Endothelial cell of umbilical vein (primary cell): ENCODE measurements at regions of chr17 and their contacts with region 1.

Region 1: DNA sequence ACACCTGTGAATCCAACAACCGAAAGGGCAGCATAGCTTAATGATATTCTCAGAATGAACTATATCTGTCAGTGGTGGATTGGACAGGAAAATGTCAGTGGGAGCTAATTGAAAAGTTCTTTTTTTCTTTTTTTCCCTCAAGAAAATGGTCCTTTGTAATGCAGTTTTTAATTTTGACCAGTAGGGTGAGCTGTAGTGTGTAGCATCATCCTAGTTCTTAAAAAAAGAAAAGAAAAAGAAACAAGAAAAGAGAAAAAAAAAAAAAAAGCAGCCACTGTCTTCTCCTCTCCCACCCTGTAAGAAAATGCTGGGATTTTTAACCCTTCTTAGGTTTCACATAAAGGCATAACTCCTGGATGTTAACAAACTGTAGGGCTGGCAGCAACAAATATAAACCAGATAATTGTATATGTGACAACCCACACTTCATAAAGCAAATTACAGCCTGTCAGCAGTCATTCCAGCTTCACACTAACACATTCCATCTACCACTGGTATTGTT is 78.1 kb downstream of the SKAP1 start:
- DNase-seq: peak; percentile 69
- H3K4me3 ChIP-seq: no peak overlapping the region
- H3K27ac ChIP-seq: no peak overlapping the region
- H3K4me1 ChIP-seq: no peaks in the 10 kb centered on the region
- H3K27me3 ChIP-seq: peaks cover 2 to 4% of the 10 kb centered on the region in 2 experiments
- CTCF ChIP-seq: peak; percentile 28 to 42
- POLR2A ChIP-seq: no peak

Region 2: GRCh38 chr17:48047741-48048383 is 304.0 kb before region 1 on chr17 and contains the start of gene NFE2L1:
- CTCF ChIA-PET with region 1: no interaction called
- POLR2A ChIA-PET with region 1: no interaction called
- dilution Hi-C with region 1: no loop called
- intact Hi-C with region 1: no loop called
- DNase-seq: peak; percentile 100
- H3K4me3 ChIP-seq: peak within 1 kb of the TSS; percentile 64 to 91 (median 71)
- H3K27ac ChIP-seq: peak within 1 kb of the TSS; percentile 72
- H3K4me1 ChIP-seq: peaks cover 40% of the 10 kb centered on the region
- H3K27me3 ChIP-seq: no peaks in the 10 kb centered on the region
- CTCF ChIP-seq: no peak
- POLR2A ChIP-seq: peak; percentile 71
- total RNA-seq, gene NFE2L1: 204 and 236 TPM in 2 replicates

Region 3: DNA sequence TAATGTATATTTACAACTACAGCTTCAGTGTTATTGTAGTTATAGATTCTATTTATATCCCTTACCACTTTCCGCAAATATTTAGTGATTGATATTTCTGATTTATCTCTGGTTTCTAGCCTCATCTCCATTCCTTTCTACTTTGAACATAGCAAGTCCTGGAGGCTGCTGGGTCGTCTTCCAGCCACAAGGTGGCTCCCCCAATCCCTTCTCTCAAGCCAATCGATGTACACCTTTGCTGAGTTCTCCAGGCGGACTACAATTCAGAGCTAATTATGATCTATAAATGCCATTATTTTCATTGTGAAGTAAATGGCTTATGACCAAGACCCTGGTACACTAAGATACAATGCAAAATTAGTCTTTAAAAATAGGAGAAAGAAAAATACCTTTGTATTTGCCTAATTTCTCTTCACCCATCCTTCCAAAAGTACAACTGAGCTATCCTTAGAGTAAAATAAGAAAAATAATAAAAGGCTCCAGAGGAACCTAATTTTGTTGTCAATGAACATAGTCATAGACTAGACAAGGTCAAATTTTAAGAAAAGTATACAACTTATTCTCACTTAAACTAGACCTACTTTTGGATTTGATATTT is 44.0 kb before region 1 on chr17:
- CTCF ChIA-PET with region 1: interaction called, 11 read pairs
- POLR2A ChIA-PET with region 1: no interaction called
- dilution Hi-C with region 1: no loop called
- intact Hi-C with region 1: no loop called
- DNase-seq: peak; percentile 59
- H3K4me3 ChIP-seq: no peak overlapping the region
- H3K27ac ChIP-seq: no peak overlapping the region
- H3K4me1 ChIP-seq: no peaks in the 10 kb centered on the region
- H3K27me3 ChIP-seq: no peaks in the 10 kb centered on the region
- CTCF ChIP-seq: peak; percentile 79 to 84
- POLR2A ChIP-seq: no peak

Region 4: GRCh38 chr17:48363161-48363560 is 11.3 kb after region 1 on chr17:
- CTCF ChIA-PET with region 1: interaction called, 23 read pairs
- POLR2A ChIA-PET with region 1: no interaction called
- dilution Hi-C with region 1: no loop called
- intact Hi-C with region 1: no loop called
- DNase-seq: no peak
- H3K4me3 ChIP-seq: no peak overlapping the region
- H3K27ac ChIP-seq: no peak overlapping the region
- H3K4me1 ChIP-seq: no peaks in the 10 kb centered on the region
- H3K27me3 ChIP-seq: peaks cover 34 to 40% of the 10 kb centered on the region in 2 experiments
- CTCF ChIP-seq: no peak
- POLR2A ChIP-seq: no peak

Region 5: GRCh38 chr17:48472411-48473281 is 120.8 kb after region 1 on chr17:
- CTCF ChIA-PET with region 1: interaction called, 16 read pairs
- POLR2A ChIA-PET with region 1: no interaction called
- dilution Hi-C with region 1: no loop called
- intact Hi-C with region 1: no loop called
- DNase-seq: no peak
- H3K4me3 ChIP-seq: no peak overlapping the region
- H3K27ac ChIP-seq: no peak overlapping the region
- H3K4me1 ChIP-seq: no peaks in the 10 kb centered on the region
- H3K27me3 ChIP-seq: peaks cover 14 to 35% of the 10 kb centered on the region in 2 experiments
- CTCF ChIP-seq: no peak
- POLR2A ChIP-seq: no peak

Region 6: GRCh38 chr17:48586355-48587258 is 234.7 kb after region 1 on chr17:
- CTCF ChIA-PET with region 1: interaction called, 11 read pairs
- POLR2A ChIA-PET with region 1: no interaction called
- dilution Hi-C with region 1: no loop called
- intact Hi-C with region 1: no loop called
- DNase-seq: peak; percentile 36
- H3K4me3 ChIP-seq: peak overlapping the region; percentile 33 to 81 (median 61)
- H3K27ac ChIP-seq: peak overlapping the region; percentile 22
- H3K4me1 ChIP-seq: peaks cover 48% of the 10 kb centered on the region
- H3K27me3 ChIP-seq: no peaks in the 10 kb centered on the region
- CTCF ChIP-seq: no peak
- POLR2A ChIP-seq: no peak

Region 7: DNA sequence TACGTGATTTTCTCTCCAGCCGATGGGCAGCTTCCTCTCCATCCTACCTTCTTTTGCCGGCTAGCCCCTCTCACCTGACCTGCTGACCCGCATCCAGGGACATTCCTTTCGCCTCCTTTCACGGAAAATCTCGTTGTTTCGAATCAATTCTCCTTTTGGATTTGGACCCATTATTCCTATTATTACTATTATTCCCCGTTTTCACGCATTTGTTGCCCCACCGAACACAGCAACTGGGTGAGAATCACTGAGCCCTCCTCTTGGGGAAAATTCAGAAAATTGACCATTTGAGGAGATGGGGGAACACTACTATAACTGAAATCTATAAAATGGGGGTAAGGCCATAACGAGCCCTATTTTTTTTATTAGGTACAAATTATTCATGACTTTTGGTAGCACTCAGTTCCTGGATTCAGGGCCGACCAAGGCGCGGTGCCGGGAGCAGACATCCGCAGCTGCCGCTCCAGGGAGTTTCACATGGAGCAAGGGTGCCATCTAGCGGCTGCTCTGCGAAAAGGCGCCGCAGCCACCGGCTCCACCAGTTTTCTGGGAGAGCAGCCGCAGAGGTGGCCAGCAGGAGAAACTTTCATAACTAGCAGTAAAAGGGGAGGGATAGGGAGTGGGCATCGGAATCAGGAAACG is 266.5 kb after region 1 on chr17:
- CTCF ChIA-PET with region 1: interaction called, 11 read pairs
- POLR2A ChIA-PET with region 1: no interaction called
- dilution Hi-C with region 1: no loop called
- intact Hi-C with region 1: no loop called
- DNase-seq: peak; percentile 83
- H3K4me3 ChIP-seq: peak overlapping the region; percentile 3 to 46 (median 30)
- H3K27ac ChIP-seq: no peak overlapping the region
- H3K4me1 ChIP-seq: peaks cover 27% of the 10 kb centered on the region
- H3K27me3 ChIP-seq: peaks cover 66 to 79% of the 10 kb centered on the region in 2 experiments
- CTCF ChIP-seq: peak; percentile 91 to 99
- POLR2A ChIP-seq: no peak